ENCODE measurements at regions of chr17 and their contacts with region 1.

Region 1: GRCh38 chr17:65231662-65232335 is 94.6 kb downstream of the RGS9 start:
- DNase-seq: no peak
- ATAC-seq: peak; percentile 71

Region 2: GRCh38 chr17:65988081-65988850 is 756.5 kb after region 1 on chr17:
- intact Hi-C with region 1: loop called (anchors 5 kb)
- DNase-seq: no peak
- ATAC-seq: no peak

Measured in Right ventricle myocardium inferior (tissue), 1 donor.